A673 (cell line): ENCODE measurements at regions of chr14 and their contacts with region 1.

Region 1: GRCh38 chr14:22929104-22929847 is at the start of gene PRMT5:
- DNase-seq: peak; percentile 100
- H3K4me3 ChIP-seq: peak within 1 kb of the TSS; percentile 88
- H3K27ac ChIP-seq: peak within 1 kb of the TSS; percentile 87
- H3K4me1 ChIP-seq: peaks cover 16% of the 10 kb centered on the region
- H3K27me3 ChIP-seq: no peaks in the 10 kb centered on the region
- CTCF ChIP-seq: no peak
- total RNA-seq, gene PRMT5: 244 and 273 TPM in 2 replicates

Region 2: DNA sequence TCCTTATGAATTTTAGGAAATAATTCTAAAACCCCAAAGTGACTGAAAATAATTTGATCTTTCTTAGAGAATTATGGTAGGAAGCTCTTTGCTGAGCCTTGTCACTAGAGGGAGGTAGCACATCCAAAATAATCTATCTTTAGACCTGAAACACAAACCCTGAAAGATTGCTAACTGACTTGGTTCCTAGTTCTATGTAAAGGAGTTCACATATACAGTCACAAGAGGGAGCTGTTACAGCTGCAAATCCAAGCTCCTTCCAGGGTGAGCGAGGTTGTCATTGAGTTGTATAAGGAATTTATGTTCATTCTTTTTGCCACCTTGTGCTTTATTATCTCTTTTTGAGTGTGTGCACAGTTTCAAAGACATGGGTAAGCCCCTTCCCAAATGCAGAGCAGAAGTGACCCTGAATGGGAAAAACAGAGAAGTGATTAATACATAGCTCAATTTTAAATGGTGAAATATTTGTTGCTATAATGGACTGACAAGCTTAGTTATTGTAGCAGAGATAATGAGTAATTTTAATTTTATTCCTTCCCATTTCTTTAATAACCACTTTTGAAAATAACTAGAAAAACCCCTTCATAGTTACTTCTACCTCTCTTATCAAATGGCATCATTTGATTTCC is 728.2 kb before region 1 on chr14:
- CTCF ChIA-PET with region 1: no interaction called
- POLR2A ChIA-PET with region 1: no interaction called
- intact Hi-C with region 1: no loop called
- DNase-seq: peak; percentile 79
- H3K4me3 ChIP-seq: no peak overlapping the region
- H3K27ac ChIP-seq: no peak overlapping the region
- H3K4me1 ChIP-seq: no peaks in the 10 kb centered on the region
- H3K27me3 ChIP-seq: no peaks in the 10 kb centered on the region
- CTCF ChIP-seq: peak; percentile 80

Region 3: DNA sequence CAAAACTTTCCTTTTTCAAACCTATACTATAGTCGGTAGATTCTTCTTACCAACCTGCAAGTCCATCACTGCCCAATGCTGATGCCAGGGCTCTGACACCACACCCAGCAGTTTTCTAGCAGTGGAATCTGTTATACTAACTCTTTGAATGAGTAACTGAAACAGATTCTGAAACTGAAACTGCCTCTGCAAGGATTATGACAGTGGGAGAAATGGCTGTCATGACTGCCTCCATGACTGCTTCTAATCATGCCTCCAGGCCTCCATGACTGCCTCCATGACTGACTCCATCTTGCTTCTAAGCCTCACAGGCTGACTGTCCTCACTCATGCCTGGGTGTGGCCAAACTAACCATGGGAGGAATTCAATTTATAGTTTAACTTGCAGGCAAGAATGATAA is 192.2 kb before region 1 on chr14:
- CTCF ChIA-PET with region 1: no interaction called
- POLR2A ChIA-PET with region 1: no interaction called
- intact Hi-C with region 1: no loop called
- DNase-seq: no peak
- H3K4me3 ChIP-seq: no peak overlapping the region
- H3K27ac ChIP-seq: no peak overlapping the region
- H3K4me1 ChIP-seq: no peaks in the 10 kb centered on the region
- H3K27me3 ChIP-seq: no peaks in the 10 kb centered on the region
- CTCF ChIP-seq: no peak

Region 4: DNA sequence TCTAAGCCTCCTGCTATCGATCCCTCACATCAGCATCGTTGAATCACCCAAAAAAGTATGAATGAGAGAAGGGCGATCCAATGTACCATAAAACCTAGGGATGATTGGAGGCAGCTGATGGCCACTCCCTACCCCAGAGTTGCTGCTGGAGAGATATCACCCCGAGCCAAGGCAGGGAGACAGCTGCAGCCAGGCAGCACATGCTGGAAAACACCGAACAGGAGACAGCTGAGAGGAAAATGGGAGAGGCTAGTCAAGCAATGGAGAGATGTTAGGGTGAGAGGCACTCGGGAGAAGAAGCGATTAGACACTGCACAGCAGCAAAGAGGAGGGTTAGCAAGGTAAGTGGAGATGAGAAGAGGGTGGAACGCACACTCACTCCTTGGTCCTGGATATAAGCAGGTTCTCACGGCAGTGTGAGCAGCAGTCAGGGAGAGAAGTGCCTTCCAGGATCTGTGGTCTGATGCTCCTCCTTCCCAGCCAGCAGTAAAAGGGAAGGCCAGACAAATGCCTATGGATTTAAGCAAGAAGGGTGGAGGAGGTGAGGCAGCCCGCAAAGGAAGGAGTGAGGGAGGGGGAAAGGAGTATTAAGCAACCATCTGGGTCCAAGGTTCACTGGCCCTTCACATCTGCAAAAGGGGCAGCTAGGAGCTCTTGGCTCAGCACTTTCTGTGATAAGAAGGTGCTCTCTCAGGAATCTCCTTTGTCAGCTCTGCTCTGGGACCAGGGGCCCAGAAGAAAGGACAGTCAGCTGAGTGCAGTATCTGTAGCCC is 114.1 kb before region 1 on chr14 and contains the start of gene SLC7A7:
- CTCF ChIA-PET with region 1: no interaction called
- POLR2A ChIA-PET with region 1: no interaction called
- intact Hi-C with region 1: no loop called
- DNase-seq: no peak
- H3K4me3 ChIP-seq: no peak within 1 kb of the TSS
- H3K27ac ChIP-seq: no peak within 1 kb of the TSS
- H3K4me1 ChIP-seq: peaks cover 4% of the 10 kb centered on the region
- H3K27me3 ChIP-seq: no peaks in the 10 kb centered on the region
- CTCF ChIP-seq: no peak
- total RNA-seq, gene SLC7A7: 1.9 and 2.3 TPM in 2 replicates

Region 5: GRCh38 chr14:22872033-22872832 is 57.0 kb before region 1 on chr14:
- CTCF ChIA-PET with region 1: interaction called, 10 read pairs
- POLR2A ChIA-PET with region 1: no interaction called
- intact Hi-C with region 1: no loop called
- DNase-seq: peak; percentile 83
- H3K4me3 ChIP-seq: peak overlapping the region; percentile 96
- H3K27ac ChIP-seq: peak overlapping the region; percentile 75
- H3K4me1 ChIP-seq: peaks cover 12% of the 10 kb centered on the region
- H3K27me3 ChIP-seq: no peaks in the 10 kb centered on the region
- CTCF ChIP-seq: peak; percentile 97

Region 6: DNA sequence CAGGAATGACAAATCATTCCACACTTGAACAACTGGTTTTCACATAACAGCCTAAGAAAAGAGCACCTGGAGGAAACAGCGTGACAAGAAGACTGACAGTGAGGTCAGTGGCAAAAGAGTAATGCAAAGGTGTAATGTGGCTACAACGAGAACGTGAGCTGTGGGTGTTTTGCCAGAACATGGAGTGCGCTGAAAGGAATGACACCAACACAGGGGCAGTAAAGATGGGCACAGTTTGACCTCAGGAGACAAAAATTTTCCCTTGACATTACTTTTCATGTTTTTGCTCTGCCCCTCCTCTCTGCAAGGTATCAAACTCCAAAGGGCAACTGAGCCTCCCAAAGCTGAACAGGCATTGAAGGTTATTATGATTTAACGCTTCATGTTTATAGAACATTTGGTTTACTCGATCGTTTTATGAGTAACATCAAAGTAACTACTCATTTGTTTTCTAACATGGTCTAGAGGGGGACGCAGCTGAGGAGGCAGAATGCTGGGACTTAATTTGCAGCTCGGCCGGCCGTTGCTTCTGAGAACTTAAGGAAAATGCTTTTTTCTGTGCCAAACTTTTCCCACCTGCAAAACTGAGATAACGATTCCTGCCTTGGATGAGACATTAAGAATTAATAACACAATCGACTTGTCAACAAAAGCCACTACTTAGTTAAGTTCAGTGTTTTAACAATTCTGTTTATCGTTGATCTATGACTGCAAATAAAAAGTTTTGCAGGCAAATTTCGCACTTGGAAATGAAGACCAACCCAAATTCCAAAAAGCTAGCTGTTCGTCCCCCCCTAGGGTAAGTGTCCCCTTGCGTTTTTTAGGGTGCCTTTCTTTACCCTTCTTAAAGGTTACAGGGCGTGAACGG is 26.7 kb after region 1 on chr14:
- CTCF ChIA-PET with region 1: interaction called, 3 read pairs
- POLR2A ChIA-PET with region 1: no interaction called
- intact Hi-C with region 1: loop called (anchors 2 kb)
- DNase-seq: no peak
- H3K4me3 ChIP-seq: peak overlapping the region; percentile 88
- H3K27ac ChIP-seq: peak overlapping the region; percentile 96
- H3K4me1 ChIP-seq: peaks cover 6% of the 10 kb centered on the region
- H3K27me3 ChIP-seq: no peaks in the 10 kb centered on the region
- CTCF ChIP-seq: no peak